ENCODE measurements at regions of chr22 and their contacts with region 1.

Region 1: GRCh38 chr22:41517172-41518047 is 26.9 kb downstream of the POLR3H start:
- DNase-seq: peak; percentile 46
- ATAC-seq: peak; percentile 72
- H3K4me3 ChIP-seq: no peak overlapping the region
- H3K27ac ChIP-seq: no peak overlapping the region
- H3K4me1 ChIP-seq: peaks cover 12% of the 10 kb centered on the region
- H3K27me3 ChIP-seq: no peaks in the 10 kb centered on the region
- CTCF ChIP-seq: peak; percentile 92
- POLR2A ChIP-seq: peak; percentile 48; the same call in 1 of the 2 replicates
- RAD21 ChIP-seq: peak; percentile 97

Region 2: DNA sequence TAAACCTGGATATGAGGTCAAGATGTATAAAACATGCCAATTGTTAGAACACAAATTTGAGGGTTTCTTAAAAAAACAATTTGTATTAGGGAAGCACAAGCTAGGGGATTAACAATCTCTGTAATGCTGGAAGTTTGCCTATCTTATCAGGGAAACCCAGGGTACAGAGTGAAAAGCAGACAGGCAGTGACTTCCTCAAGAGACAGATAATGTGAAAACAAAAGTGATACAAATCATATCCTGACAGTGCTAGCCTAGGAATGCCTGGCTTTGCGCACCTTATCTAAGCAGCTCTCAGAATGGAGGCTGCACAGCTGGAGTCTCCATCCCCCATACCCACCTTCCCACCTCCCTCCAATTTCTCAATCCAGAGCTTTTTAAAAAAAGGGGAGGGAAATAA is 588.8 kb before region 1 on chr22:
- CTCF ChIA-PET with region 1: no interaction called
- POLR2A ChIA-PET with region 1: no interaction called
- dilution Hi-C with region 1: no loop called
- in situ Hi-C with region 1: loop called (anchors 25 kb)
- intact Hi-C with region 1: no loop called
- DNase-seq: no peak
- ATAC-seq: peak; percentile 17; the same call in 1 of the 2 replicates
- H3K4me3 ChIP-seq: no peak overlapping the region
- H3K27ac ChIP-seq: no peak overlapping the region
- H3K4me1 ChIP-seq: no peaks in the 10 kb centered on the region
- H3K27me3 ChIP-seq: no peaks in the 10 kb centered on the region
- CTCF ChIP-seq: no peak
- POLR2A ChIP-seq: no peak
- RAD21 ChIP-seq: no peak

Region 3: GRCh38 chr22:41171996-41172395 is 345.4 kb before region 1 on chr22:
- CTCF ChIA-PET with region 1: no interaction called
- POLR2A ChIA-PET with region 1: no interaction called
- dilution Hi-C with region 1: no loop called
- in situ Hi-C with region 1: no loop called
- intact Hi-C with region 1: loop called (anchors 5 kb)
- DNase-seq: no peak
- ATAC-seq: no peak
- H3K4me3 ChIP-seq: no peak overlapping the region
- H3K27ac ChIP-seq: no peak overlapping the region
- H3K4me1 ChIP-seq: no peaks in the 10 kb centered on the region
- H3K27me3 ChIP-seq: no peaks in the 10 kb centered on the region
- CTCF ChIP-seq: no peak
- POLR2A ChIP-seq: no peak
- RAD21 ChIP-seq: no peak

Region 4: DNA sequence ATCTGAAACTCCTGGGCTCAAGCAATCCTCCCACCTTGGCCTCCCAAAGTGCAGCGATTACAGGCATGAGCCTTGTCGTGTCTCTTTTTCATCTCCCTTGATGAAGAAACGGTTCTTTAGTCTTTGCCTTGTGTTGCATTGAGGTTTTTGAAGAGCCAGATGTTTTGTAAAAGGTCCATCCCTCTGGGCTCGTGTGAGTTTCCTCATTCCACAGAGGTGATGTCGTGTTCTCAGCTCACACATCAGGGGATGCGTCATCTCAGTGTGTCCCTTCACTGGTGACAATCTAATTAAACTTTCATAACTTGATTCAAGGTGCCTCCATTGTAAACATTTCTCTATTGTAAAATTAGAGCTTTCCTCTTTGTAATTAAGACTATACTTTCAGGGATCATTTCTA is 165.4 kb before region 1 on chr22:
- CTCF ChIA-PET with region 1: no interaction called
- POLR2A ChIA-PET with region 1: no interaction called
- dilution Hi-C with region 1: no loop called
- in situ Hi-C with region 1: no loop called
- intact Hi-C with region 1: no loop called
- DNase-seq: peak; percentile 55
- ATAC-seq: peak; percentile 33
- H3K4me3 ChIP-seq: no peak overlapping the region
- H3K27ac ChIP-seq: no peak overlapping the region
- H3K4me1 ChIP-seq: peaks cover 5% of the 10 kb centered on the region
- H3K27me3 ChIP-seq: no peaks in the 10 kb centered on the region
- CTCF ChIP-seq: no peak
- POLR2A ChIP-seq: no peak
- RAD21 ChIP-seq: no peak

Region 5: DNA sequence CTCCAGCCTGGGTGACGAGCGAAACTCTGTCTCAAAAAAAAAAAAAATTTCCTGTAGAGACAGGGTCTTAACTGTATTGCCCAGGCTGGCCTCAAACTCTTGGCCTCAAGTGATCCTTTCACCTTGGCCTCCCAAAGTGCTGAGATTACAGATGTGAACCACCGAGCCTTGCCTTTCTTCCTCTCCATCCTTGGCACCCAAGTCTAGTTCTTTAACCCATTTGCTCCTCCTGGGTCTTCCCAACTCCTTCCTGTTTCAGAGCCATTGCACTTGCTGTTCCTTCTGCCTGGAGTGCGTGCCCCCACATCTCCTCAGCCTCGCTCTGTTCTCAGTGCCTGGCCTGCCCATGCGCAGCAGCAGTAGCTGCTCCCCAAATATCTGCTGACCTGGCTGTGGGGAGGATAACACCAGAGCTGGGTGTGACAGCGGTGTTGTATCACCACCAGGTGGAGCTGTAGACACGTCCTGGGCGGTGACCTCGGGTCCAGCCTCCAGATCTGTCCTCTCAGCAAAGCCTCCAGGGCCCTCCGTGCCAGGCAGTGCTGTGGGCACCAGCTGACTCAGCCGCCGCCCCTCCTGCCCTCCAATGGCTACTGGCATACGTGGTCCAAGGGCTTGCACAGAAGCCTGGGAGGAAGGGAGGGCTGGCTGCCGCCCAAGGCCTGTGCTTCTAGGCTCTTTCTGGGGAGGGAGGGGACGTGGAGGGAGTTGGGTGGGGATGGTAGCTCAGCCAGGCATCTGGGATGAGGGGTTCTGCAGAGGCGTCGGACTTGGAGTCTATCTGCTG is 113.7 kb before region 1 on chr22:
- CTCF ChIA-PET with region 1: interaction called, 35 read pairs
- POLR2A ChIA-PET with region 1: interaction called, 3 read pairs
- dilution Hi-C with region 1: no loop called
- in situ Hi-C with region 1: loop called (anchors 5 kb)
- intact Hi-C with region 1: loop called (anchors 1 kb)
- DNase-seq: peak; percentile 78
- ATAC-seq: peak; percentile 91
- H3K4me3 ChIP-seq: no peak overlapping the region
- H3K27ac ChIP-seq: no peak overlapping the region
- H3K4me1 ChIP-seq: peaks cover 13% of the 10 kb centered on the region
- H3K27me3 ChIP-seq: no peaks in the 10 kb centered on the region
- CTCF ChIP-seq: peak; percentile 92
- POLR2A ChIP-seq: no peak
- RAD21 ChIP-seq: peak; percentile 94

Region 6: DNA sequence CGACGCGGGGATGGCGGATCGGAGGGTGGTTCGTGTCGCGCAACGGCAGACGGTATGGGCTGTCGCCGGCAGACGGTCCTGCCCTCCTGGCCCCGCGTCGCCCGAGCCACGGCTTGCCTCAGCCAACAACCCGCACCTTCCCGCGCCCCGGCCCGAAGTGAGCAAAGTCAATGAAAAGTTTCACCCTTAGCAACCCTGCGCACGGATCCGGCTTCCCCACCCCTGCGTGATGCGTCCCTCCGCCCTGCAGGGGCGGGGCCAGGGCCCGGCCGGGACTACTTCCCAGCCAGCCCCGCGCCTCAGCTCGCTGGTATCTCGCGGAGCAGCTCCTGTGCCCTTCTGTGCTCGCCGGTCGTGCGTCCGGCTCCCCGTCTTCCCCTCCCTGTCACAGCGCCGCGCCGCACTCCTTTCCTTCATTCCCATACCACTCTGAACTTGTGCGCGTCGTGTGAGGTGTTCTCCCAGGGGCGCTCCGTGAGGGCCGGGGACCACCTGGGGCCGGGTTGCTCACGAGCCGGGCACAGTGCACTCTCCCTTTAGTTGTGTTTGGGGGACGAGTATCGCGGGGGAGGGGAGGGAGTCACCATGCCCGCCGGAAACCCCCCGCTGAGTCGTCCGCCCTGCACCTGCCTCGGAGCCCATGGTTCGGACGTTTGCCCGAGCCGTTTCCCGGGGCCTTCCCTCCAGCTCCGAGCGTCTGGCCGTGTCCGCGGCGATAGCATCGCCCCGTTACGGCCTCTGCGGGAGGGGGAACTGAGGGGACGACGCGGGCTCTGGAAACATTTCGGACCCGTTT is 70.6 kb before region 1 on chr22 and contains the start of gene TOB2:
- CTCF ChIA-PET with region 1: no interaction called
- POLR2A ChIA-PET with region 1: interaction called, 3 read pairs
- dilution Hi-C with region 1: no loop called
- in situ Hi-C with region 1: no loop called
- intact Hi-C with region 1: loop called (anchors 2 kb)
- DNase-seq: peak; percentile 95
- ATAC-seq: peak; percentile 63
- H3K4me3 ChIP-seq: peak within 1 kb of the TSS; percentile 97
- H3K27ac ChIP-seq: peak within 1 kb of the TSS; percentile 97
- H3K4me1 ChIP-seq: peaks cover 3% of the 10 kb centered on the region
- H3K27me3 ChIP-seq: no peaks in the 10 kb centered on the region
- CTCF ChIP-seq: no peak
- POLR2A ChIP-seq: peak; percentile 99
- RAD21 ChIP-seq: peak; percentile 29; the same call in 1 of the 2 replicates
- total RNA-seq, gene TOB2: 16.9 and 17.4 TPM in 2 replicates

Region 7: GRCh38 chr22:41589391-41590241 is 72.2 kb after region 1 on chr22 and contains the start of gene PMM1:
- CTCF ChIA-PET with region 1: no interaction called
- POLR2A ChIA-PET with region 1: no interaction called
- dilution Hi-C with region 1: no loop called
- in situ Hi-C with region 1: no loop called
- intact Hi-C with region 1: no loop called
- DNase-seq: peak; percentile 99
- ATAC-seq: peak; percentile 98
- H3K4me3 ChIP-seq: peak within 1 kb of the TSS; percentile 76
- H3K27ac ChIP-seq: peak within 1 kb of the TSS; percentile 73
- H3K4me1 ChIP-seq: peaks cover 4% of the 10 kb centered on the region
- H3K27me3 ChIP-seq: no peaks in the 10 kb centered on the region
- CTCF ChIP-seq: no peak
- POLR2A ChIP-seq: peak; percentile 88
- RAD21 ChIP-seq: no peak
- total RNA-seq, gene PMM1: 22.2 and 22.8 TPM in 2 replicates

Region 8: DNA sequence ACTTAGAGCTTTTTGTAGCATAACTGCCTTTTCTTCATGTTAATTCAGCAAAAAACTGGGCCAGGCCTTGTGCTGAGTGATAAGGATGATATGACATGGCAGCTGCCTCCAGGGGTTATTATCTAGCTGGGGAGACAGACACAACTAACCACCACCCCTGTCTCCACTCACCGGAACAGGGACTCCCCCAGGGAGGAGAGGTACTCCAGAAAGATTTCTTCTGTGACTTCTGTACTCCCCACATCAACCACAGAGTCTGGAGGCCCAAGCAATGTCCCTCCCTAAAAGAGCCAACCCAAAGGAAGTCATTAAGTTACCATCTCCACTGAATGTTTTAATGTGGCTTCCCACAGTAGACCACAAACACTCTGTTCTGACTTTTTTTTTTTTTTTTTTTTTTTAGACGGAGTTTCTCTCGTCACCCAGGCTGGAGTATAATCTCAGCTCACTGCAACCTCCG is 86.5 kb after region 1 on chr22:
- CTCF ChIA-PET with region 1: no interaction called
- POLR2A ChIA-PET with region 1: no interaction called
- dilution Hi-C with region 1: no loop called
- in situ Hi-C with region 1: no loop called
- intact Hi-C with region 1: no loop called
- DNase-seq: no peak
- ATAC-seq: no peak
- H3K4me3 ChIP-seq: no peak overlapping the region
- H3K27ac ChIP-seq: no peak overlapping the region
- H3K4me1 ChIP-seq: no peaks in the 10 kb centered on the region
- H3K27me3 ChIP-seq: no peaks in the 10 kb centered on the region
- CTCF ChIP-seq: no peak
- POLR2A ChIP-seq: no peak
- RAD21 ChIP-seq: no peak

Region 9: GRCh38 chr22:41697126-41697775 is 179.8 kb after region 1 on chr22:
- CTCF ChIA-PET with region 1: no interaction called
- POLR2A ChIA-PET with region 1: no interaction called
- dilution Hi-C with region 1: no loop called
- in situ Hi-C with region 1: no loop called
- intact Hi-C with region 1: no loop called
- DNase-seq: peak; percentile 80
- ATAC-seq: peak; percentile 92
- H3K4me3 ChIP-seq: no peak overlapping the region
- H3K27ac ChIP-seq: peak overlapping the region; percentile 37
- H3K4me1 ChIP-seq: peaks cover 6% of the 10 kb centered on the region
- H3K27me3 ChIP-seq: no peaks in the 10 kb centered on the region; the same call in 1 of the 2 replicates
- CTCF ChIP-seq: peak; percentile 88
- POLR2A ChIP-seq: no peak
- RAD21 ChIP-seq: peak; percentile 84

Measured in IMR-90 (cell line).